Dendritic cell treated with granulocyte-macrophage colony-stimulating factor and Interleukin-4, amounts not matched to agents 40 ng/mL and 50 ng/mL, for 4 days (primary cell): ENCODE measurements at regions of chr1 and their contacts with region 1.

Region 1: DNA sequence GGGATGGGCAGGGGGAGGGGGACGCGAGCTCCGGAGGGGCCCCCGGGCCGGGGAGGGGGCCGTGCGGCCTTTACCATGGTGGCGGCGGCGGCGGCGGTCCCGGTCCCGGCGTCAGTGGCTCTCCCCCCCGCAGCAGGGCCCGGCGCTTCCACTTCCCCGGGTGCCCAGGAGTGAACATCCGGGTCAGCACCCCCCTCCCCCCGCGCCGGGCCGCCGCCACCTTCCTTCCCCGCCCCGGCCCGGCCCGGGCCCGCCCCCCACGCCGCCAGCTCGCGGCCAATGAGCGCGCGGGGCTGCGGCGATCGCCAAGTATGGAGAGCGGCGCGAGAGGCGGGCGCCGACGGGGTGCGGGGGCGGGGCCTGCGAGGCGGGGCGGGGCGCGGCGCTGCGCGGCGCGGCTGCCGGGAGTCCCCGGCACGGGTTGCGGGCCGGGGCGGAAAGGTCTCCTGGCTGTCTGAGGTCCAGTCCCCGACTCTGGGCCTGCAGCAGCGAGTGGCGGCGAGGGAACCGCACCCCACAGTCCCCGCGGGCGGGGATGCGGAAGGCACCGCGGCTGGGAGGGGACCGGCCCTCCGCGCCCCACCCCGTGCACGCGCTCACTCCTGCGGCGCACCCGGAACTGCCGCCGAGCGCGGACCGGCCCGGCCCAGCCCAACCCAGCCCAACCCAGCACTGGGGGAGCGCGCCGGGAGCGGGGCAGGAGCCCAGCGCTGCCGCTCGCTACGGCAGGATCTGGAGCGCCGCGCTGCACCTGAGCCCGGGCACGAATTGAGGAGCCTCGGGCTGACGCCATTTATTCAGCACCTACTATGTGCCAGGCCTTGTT is at the start of gene CAPZB:
- H3K4me3 Mint-ChIP-seq: peak within 1 kb of the TSS; percentile 98
- H3K27ac Mint-ChIP-seq: peak within 1 kb of the TSS; percentile 99
- H3K4me1 Mint-ChIP-seq: peaks cover 67% of the 10 kb centered on the region
- H3K27me3 Mint-ChIP-seq: no peaks in the 10 kb centered on the region

Region 2: DNA sequence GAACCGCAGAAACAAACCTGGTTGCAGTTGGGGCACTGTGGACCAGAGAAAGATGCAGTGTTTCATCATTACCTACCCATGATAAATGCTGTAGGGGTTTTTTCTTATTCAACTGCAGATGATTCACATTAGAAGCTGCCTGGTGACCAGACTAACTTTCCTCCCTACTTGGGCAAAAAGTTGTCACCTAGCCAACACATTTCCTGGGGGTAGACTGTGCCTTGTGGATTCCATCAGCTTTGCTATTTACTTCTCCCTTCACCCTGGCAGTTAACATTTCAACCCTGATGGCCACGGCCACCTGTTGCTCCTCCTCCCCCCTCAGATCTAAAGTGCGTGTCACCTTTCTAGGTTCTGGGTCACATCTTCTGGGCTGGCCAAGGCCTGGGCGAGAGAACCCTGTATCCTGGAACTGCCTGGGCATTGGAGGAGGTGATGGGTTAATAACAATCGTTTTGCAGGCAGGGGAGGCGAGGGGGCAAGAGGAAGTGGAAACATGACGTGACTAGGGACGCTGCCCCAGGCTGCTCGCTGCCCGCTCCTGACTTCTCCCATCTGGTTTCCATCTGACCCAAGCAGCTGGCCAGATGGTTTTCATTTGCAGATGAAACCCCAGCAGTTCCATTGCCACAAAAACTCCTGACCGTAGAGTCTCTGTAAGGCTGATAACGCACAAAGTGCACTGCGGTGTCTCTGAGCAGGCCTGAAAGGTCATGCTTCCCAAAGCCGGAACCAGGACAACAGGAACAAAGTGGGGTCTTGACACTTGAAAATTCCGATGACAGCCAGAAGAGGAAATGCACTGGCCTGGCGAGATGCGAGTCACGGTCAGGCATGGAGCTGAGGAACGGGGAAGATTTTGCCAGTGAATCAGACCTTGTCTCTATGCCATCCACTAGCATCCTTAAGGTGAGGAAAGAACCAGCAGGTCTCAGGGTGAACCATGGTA is 36.8 kb before region 1 on chr1:
- intact Hi-C with region 1: loop called (anchors 5 kb)
- H3K4me3 Mint-ChIP-seq: peak overlapping the region; percentile 60
- H3K27ac Mint-ChIP-seq: peak overlapping the region; percentile 95
- H3K4me1 Mint-ChIP-seq: peaks cover 93% of the 10 kb centered on the region
- H3K27me3 Mint-ChIP-seq: no peaks in the 10 kb centered on the region

Region 3: GRCh38 chr1:19582302-19582701 is 96.7 kb after region 1 on chr1:
- intact Hi-C with region 1: loop called (anchors 1 kb)
- H3K4me3 Mint-ChIP-seq: no peak overlapping the region
- H3K27ac Mint-ChIP-seq: no peak overlapping the region
- H3K4me1 Mint-ChIP-seq: peaks cover 34% of the 10 kb centered on the region
- H3K27me3 Mint-ChIP-seq: peaks cover 4% of the 10 kb centered on the region

Region 4: DNA sequence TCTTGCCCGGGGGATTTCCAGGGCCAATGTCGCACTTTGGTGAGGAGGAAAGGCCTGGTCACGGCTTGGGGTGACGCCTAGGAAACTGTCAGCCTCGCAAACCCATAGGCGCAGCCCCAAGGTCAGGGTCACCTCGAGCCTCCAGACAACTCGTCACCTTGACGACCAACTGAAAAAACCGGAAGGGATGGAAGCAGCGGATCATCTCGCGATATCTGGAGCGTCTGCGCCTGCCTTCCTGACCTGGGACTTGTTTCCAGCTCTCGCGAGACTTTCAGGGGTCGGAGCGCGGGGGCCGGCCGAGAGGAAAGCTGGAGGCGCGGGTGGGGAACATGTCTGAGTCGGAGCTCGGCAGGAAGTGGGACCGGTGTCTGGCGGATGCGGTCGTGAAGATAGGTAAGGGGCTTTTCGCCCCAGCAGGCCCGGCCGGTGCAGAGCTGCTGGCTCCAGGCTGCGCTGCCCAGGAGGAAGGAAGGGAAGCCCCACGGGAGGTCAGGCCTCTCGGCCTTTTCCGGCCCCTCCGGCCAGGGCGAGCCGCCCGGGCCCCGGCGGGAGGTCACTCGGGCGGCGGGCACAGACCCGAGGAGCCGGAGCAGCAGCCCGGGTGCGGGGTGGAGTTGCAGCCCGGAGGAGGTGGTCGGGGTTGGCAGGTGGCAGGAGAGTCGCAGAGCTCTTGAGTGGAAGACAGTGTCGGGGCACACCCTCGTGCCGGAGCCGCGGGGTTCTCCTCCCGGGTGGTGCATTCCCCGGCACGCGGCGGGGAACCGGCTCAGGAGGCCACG is 111.3 kb after region 1 on chr1:
- intact Hi-C with region 1: loop called (anchors 2 kb)
- H3K4me3 Mint-ChIP-seq: peak overlapping the region; percentile 89
- H3K27ac Mint-ChIP-seq: peak overlapping the region; percentile 94
- H3K4me1 Mint-ChIP-seq: peaks cover 41% of the 10 kb centered on the region
- H3K27me3 Mint-ChIP-seq: no peaks in the 10 kb centered on the region

Region 5: GRCh38 chr1:19651141-19651737 is 165.7 kb after region 1 on chr1:
- intact Hi-C with region 1: loop called (anchors 5 kb)
- H3K4me3 Mint-ChIP-seq: no peak overlapping the region
- H3K27ac Mint-ChIP-seq: no peak overlapping the region
- H3K4me1 Mint-ChIP-seq: peaks cover 18% of the 10 kb centered on the region
- H3K27me3 Mint-ChIP-seq: peaks cover 50% of the 10 kb centered on the region